CD8-positive, alpha-beta memory T cell (primary cell): ENCODE measurements at regions of chr2 and their contacts with region 1.

Region 1: DNA sequence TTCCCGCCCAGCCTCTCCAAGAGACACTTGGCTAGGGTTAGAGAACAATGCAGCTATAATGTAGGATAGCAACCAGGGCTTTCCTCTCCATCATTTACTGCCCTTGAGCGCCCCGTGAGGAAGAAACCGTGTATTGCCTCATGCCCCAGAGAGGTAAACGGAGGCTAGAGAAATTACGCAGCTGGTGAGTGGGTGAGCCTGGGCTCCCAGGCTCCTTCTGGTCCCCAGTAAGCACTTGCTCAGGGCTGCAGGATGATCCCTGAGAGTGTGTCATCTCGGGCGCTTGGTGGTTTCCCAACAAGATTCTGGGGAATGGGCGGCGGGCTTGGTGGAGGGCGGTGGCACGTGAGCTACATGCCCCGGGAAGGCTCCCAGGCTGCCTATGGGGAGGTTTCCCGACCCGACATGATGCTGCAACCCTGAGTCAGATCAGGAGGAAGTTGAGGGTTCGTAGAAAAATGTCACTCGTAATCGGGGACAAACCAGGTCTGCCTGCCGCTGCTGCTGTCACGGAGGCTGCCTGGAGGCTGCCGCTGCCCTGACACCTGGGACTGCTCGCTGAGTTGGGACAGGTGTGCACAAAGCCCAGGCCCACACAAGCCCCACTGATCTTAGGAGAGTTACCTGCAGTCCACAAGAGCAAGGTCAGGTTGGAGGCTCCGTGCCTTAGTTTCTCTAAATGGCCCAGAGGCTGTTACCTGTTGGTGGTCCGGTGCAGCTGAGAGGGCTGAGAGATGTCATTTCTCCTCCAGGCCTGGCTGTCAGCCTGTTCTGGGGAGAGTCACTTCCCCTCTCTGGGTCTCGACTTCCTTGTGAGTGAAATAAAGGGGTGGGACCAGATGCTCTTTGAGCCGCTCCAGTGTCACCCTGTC is at the start of gene GPR55:
- DNase-seq: peak in 3 of 5 donors; percentile 18 to 73 (median 59)
- H3K4me3 ChIP-seq: peak within 1 kb of the TSS; percentile 61
- H3K4me3 Mint-ChIP-seq: peak within 1 kb of the TSS; percentile 85 to 94 (median 91)
- H3K27ac ChIP-seq: peak within 1 kb of the TSS; percentile 13
- H3K27ac Mint-ChIP-seq: peak within 1 kb of the TSS; percentile 61 to 97 (median 86)
- H3K4me1 ChIP-seq: peaks cover 21% of the 10 kb centered on the region
- H3K4me1 Mint-ChIP-seq: peaks cover 39 to 65% (median 50%) of the 10 kb centered on the region in 3 donors
- H3K27me3 ChIP-seq: no peaks in the 10 kb centered on the region
- H3K27me3 Mint-ChIP-seq: peaks cover 6 to 7% of the 10 kb centered on the region in 2 donors
- total RNA-seq, gene GPR55: 11.1 to 11.6 TPM

Region 2: DNA sequence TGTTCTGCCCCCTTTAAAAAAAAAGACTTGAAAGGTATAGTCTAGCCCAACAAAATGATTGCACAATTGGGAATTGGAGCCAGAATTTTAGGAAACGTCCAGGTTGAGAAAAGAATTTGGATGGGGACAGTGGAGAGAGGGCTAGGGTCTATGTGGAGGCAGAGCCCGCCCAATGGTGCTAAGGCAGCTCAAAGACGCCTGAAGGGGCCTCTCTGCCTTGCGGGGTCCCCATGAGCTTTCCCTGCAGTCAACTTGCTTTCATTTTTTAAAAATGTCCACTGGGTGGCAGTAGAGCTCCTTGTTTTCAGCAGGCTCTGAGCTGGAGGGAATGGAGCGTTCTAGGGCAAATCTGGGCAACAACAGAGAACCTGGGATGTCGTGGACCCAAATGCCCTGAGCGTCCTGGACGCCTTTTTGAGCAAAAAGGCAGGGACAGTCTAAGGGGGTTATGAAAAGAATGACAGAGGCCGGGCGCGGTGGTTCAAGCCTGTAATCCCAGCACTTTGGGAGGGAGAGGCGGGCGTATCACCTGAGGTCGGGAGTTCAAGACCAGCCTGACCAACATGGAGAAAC is 100.2 kb before region 1 on chr2:
- CTCF ChIA-PET with region 1: interaction called, 13 read pairs
- POLR2A ChIA-PET with region 1: no interaction called
- DNase-seq: peak in 4 of 5 donors; percentile 43 to 74 (median 68)
- H3K4me3 ChIP-seq: peak overlapping the region; percentile 35
- H3K4me3 Mint-ChIP-seq: peak overlapping the region in 6 of 7 donors; percentile 5 to 72 (median 46)
- H3K27ac ChIP-seq: no peak overlapping the region
- H3K27ac Mint-ChIP-seq: peak overlapping the region in 1 of 8 donors; percentile 45
- H3K4me1 ChIP-seq: no peaks in the 10 kb centered on the region
- H3K4me1 Mint-ChIP-seq: peaks cover 7 to 17% (median 8%) of the 10 kb centered on the region in 3 donors
- H3K27me3 ChIP-seq: peaks cover 17% of the 10 kb centered on the region
- H3K27me3 Mint-ChIP-seq: peaks cover 29 to 30% of the 10 kb centered on the region in 2 donors

Region 3: GRCh38 chr2:230847883-230848388 is 76.8 kb before region 1 on chr2:
- CTCF ChIA-PET with region 1: interaction called, 21 read pairs
- POLR2A ChIA-PET with region 1: no interaction called
- DNase-seq: peak; percentile 70 to 89 (median 76)
- H3K4me3 ChIP-seq: no peak overlapping the region
- H3K4me3 Mint-ChIP-seq: peak overlapping the region in 1 of 7 donors; percentile 24
- H3K27ac ChIP-seq: no peak overlapping the region
- H3K27ac Mint-ChIP-seq: no peak overlapping the region
- H3K4me1 ChIP-seq: peaks cover 6% of the 10 kb centered on the region
- H3K4me1 Mint-ChIP-seq: peaks cover 5 to 9% (median 6%) of the 10 kb centered on the region in 3 donors
- H3K27me3 ChIP-seq: no peaks in the 10 kb centered on the region
- H3K27me3 Mint-ChIP-seq: peaks cover 24 to 40% of the 10 kb centered on the region in 2 donors

Region 4: GRCh38 chr2:230864598-230865306 is 60.0 kb before region 1 on chr2 and contains the start of gene ITM2C:
- CTCF ChIA-PET with region 1: interaction called, 10 read pairs
- POLR2A ChIA-PET with region 1: no interaction called
- DNase-seq: peak; percentile 63 to 82 (median 72)
- H3K4me3 ChIP-seq: peak within 1 kb of the TSS; percentile 65
- H3K4me3 Mint-ChIP-seq: peak within 1 kb of the TSS; percentile 91 to 95 (median 94)
- H3K27ac ChIP-seq: peak within 1 kb of the TSS; percentile 24
- H3K27ac Mint-ChIP-seq: peak within 1 kb of the TSS; percentile 81 to 98 (median 88)
- H3K4me1 ChIP-seq: peaks cover 41% of the 10 kb centered on the region
- H3K4me1 Mint-ChIP-seq: peaks cover 40 to 79% (median 49%) of the 10 kb centered on the region in 3 donors
- H3K27me3 ChIP-seq: no peaks in the 10 kb centered on the region
- H3K27me3 Mint-ChIP-seq: peaks cover 3 to 6% of the 10 kb centered on the region in 2 donors
- total RNA-seq, gene ITM2C: 56.1 to 58.6 TPM

Region 5: DNA sequence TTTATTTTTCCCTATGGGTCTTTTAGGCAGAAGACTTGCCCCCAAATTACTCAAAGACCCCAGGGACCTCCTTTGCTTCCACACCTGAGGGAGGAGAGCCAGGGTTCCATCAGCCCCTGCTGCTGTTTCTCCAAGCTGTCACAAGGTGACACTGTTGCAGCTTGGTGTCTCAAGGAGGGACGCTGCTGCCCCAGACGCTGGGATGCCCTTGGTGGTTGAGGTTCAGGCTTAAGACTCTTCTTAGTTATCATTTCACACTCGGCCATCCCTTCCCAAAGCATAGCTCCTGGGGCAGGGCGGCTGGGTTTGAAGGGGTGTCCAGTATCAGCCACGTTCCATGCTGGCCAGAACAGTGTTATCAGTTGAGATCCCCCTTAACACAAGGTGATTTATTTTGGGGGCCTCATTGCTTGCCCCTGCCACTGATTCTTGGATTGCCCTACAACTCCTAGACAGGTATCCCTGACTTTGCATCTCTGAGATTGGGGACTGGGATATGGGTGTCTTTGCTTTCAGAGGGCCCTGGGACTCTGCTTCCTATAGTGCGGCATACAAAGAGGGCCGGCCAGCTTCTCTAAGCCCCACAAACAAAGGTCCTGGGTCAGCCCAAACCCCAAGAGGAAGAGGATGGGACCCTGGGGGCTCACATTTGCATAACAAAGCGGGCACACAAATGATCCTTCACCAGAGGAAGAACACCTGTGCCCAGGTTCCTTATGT is 22.4 kb before region 1 on chr2:
- CTCF ChIA-PET with region 1: interaction called, 14 read pairs
- POLR2A ChIA-PET with region 1: interaction called, 3 read pairs
- DNase-seq: peak in 4 of 5 donors; percentile 27 to 67 (median 48)
- H3K4me3 ChIP-seq: no peak overlapping the region
- H3K4me3 Mint-ChIP-seq: no peak overlapping the region
- H3K27ac ChIP-seq: no peak overlapping the region
- H3K27ac Mint-ChIP-seq: no peak overlapping the region
- H3K4me1 ChIP-seq: peaks cover 18% of the 10 kb centered on the region
- H3K4me1 Mint-ChIP-seq: peaks cover 16 to 38% (median 28%) of the 10 kb centered on the region in 3 donors
- H3K27me3 ChIP-seq: no peaks in the 10 kb centered on the region
- H3K27me3 Mint-ChIP-seq: peaks cover 3 to 7% of the 10 kb centered on the region in 2 donors

Region 6: GRCh38 chr2:230974096-230974913 is 49.6 kb after region 1 on chr2:
- CTCF ChIA-PET with region 1: interaction called, 10 read pairs
- POLR2A ChIA-PET with region 1: interaction called, 4 read pairs
- DNase-seq: peak; percentile 49 to 92 (median 73)
- H3K4me3 ChIP-seq: peak overlapping the region; percentile 35
- H3K4me3 Mint-ChIP-seq: peak overlapping the region; percentile 12 to 83 (median 76)
- H3K27ac ChIP-seq: peak overlapping the region; percentile 33
- H3K27ac Mint-ChIP-seq: peak overlapping the region; percentile 93 to 99 (median 96)
- H3K4me1 ChIP-seq: peaks cover 23% of the 10 kb centered on the region
- H3K4me1 Mint-ChIP-seq: peaks cover 47 to 72% (median 66%) of the 10 kb centered on the region in 3 donors
- H3K27me3 ChIP-seq: no peaks in the 10 kb centered on the region
- H3K27me3 Mint-ChIP-seq: no peaks in the 10 kb centered on the region

Region 7: DNA sequence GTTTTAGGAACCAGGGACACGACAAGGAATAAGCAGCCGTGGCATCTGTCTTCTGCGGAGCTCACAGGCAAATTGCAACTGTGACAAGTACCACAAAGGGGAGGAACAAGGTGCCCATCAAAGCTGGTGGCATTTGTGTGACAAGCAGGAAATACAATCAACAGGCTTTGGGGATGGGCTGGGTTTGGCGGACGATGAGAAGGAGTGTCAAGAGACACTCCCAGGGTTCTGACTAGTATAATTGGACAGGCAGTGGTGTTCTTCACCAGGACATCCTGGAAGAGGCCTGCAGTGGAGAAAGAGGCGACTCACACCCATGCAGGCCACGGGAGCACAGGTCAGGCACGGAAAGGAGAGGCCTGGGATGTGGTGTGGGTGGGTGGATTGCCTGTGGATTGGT is 57.0 kb after region 1 on chr2:
- CTCF ChIA-PET with region 1: interaction called, 79 read pairs
- POLR2A ChIA-PET with region 1: interaction called, 4 read pairs
- DNase-seq: peak in 3 of 5 donors; percentile 29 to 67 (median 41)
- H3K4me3 ChIP-seq: no peak overlapping the region
- H3K4me3 Mint-ChIP-seq: peak overlapping the region; percentile 36 to 77 (median 64)
- H3K27ac ChIP-seq: no peak overlapping the region
- H3K27ac Mint-ChIP-seq: peak overlapping the region in 7 of 8 donors; percentile 9 to 89 (median 57)
- H3K4me1 ChIP-seq: peaks cover 26% of the 10 kb centered on the region
- H3K4me1 Mint-ChIP-seq: peaks cover 37 to 82% (median 72%) of the 10 kb centered on the region in 3 donors
- H3K27me3 ChIP-seq: no peaks in the 10 kb centered on the region
- H3K27me3 Mint-ChIP-seq: peaks cover 0 to 3% of the 10 kb centered on the region in 2 donors